Activated CD4-positive, alpha-beta T cell treated with anti-CD3 and anti-CD28 coated beads, Interleukin-2, amount 10 ng/mL, durations not matched to agents 24 days and 14 days (primary cell): ENCODE measurements at regions of chr3 and their contacts with region 1.

Region 1: DNA sequence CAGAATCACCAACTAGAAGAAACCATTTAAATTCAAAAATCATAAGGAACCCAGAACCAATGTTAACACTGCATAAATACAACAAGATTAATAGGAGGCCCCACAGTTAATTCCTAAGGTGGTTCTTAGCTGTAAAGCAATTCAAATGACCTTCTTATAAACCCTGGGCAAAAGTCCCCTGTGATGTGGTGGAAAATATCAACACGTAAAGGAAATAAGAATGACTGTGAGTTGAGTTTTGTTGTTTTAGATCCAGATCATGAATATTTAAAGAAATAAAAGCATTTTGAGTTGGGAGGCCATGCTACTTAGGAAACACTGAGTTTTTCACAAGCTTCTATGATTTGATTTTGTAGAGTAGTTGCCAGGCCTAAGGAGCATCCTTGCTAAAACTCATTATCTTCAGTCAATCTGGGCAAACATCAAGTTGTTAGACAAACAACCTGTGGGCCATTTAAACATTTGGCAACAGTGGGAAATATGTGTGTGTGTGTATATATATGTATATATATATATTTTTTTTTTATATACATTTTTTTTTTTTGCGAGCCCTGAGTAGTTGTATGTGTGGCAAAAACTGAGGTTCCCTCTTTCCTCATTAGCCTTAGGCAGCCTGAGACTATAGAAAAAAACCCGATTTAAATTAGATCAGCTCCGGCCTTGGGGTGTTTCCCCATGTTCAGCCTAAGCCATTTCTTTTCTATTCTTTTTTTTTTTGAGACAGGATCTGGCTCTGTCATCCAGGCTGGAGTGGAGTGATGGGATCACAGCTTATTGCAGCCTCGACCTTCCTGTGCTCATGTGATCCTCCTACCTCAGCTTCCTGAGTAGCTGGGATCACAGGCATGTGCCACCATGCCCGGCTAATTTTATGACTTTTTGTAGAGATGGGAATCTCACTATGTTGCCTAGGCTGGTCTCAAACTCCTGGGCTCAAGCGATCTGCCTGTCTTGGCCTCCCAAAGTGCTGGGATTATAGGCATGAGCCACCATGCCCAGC is 8.0 kb upstream of the PXK start:
- DNase-seq: peak; percentile 73
- H3K4me3 Mint-ChIP-seq: peak overlapping the region; percentile 67
- H3K27ac Mint-ChIP-seq: peak overlapping the region; percentile 90
- H3K4me1 Mint-ChIP-seq: peaks cover 28% of the 10 kb centered on the region
- H3K27me3 Mint-ChIP-seq: no peaks in the 10 kb centered on the region

Region 2: DNA sequence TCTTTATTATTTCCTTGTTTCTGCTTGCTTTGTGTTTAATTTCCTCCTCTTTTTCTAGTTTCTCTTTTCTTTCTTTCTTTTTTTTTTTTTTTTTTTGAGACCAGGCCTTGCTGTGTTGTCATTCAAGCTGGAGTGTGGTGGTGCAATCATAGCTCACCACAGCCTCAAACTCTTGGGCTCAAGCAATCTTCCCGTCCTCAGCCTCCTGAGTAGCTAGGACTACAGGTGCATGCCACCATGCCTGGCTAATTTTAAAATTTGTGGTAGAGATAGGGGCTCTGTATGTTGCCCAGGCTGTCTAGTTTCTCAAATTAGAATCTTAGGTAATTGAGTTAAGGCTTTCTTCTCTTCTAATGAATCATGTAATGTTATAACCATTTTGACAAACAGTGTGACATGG is 546.2 kb before region 1 on chr3:
- intact Hi-C with region 1: no loop called
- DNase-seq: no peak
- H3K4me3 Mint-ChIP-seq: no peak overlapping the region
- H3K27ac Mint-ChIP-seq: no peak overlapping the region
- H3K4me1 Mint-ChIP-seq: peaks cover 13% of the 10 kb centered on the region
- H3K27me3 Mint-ChIP-seq: no peaks in the 10 kb centered on the region

Region 3: GRCh38 chr3:57949785-57950615 is 374.7 kb before region 1 on chr3:
- intact Hi-C with region 1: no loop called
- DNase-seq: no peak
- H3K4me3 Mint-ChIP-seq: no peak overlapping the region
- H3K27ac Mint-ChIP-seq: no peak overlapping the region
- H3K4me1 Mint-ChIP-seq: no peaks in the 10 kb centered on the region
- H3K27me3 Mint-ChIP-seq: no peaks in the 10 kb centered on the region

Region 4: GRCh38 chr3:58206406-58207011 is 118.2 kb before region 1 on chr3:
- intact Hi-C with region 1: no loop called
- DNase-seq: peak; percentile 71
- H3K4me3 Mint-ChIP-seq: no peak overlapping the region
- H3K27ac Mint-ChIP-seq: peak overlapping the region; percentile 59
- H3K4me1 Mint-ChIP-seq: peaks cover 11% of the 10 kb centered on the region
- H3K27me3 Mint-ChIP-seq: peaks cover 14% of the 10 kb centered on the region

Region 5: DNA sequence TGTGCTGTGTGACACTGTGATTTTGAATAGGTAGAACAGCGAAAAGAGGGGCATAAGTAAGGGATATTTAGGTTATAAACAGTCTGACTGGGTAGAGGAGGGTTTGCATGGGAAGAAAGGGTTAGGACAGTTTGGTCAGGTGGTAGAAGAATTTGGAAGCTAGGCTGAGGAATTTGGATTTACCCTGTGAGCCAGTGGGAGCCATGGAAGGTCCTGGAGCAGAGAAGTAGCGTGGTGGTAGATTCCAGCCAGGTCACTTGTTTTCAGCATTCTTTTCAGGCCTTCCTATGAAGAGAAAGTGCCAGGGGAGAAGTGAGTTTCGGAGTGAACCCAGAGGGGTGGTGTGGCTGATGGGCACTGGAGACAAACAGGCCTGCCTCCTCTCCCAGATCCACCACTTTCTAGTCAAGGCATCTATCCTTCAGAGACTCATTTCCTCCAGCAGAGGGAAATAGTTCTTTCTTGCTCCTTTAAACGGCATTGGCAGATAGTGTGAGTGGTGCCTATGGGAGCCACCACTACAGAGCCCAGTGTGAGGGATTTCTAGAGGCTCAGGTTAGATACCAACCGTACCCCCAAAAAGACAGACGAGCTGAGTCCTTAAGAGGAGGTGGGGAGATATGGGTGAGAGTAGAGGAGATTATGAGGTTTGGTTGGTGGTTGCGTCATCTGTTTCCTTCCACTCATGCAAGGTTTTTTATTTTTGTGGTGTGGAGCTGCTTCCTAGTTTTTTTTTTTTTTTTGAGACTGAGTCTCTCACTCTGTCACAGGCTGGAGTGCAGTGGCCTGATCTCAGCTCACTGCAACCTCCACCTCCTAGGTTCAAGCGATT is 29.2 kb after region 1 on chr3:
- intact Hi-C with region 1: loop called (anchors 1 kb)
- DNase-seq: peak; percentile 87
- H3K4me3 Mint-ChIP-seq: peak overlapping the region; percentile 82
- H3K27ac Mint-ChIP-seq: peak overlapping the region; percentile 92
- H3K4me1 Mint-ChIP-seq: peaks cover 83% of the 10 kb centered on the region
- H3K27me3 Mint-ChIP-seq: no peaks in the 10 kb centered on the region

Region 6: GRCh38 chr3:58414538-58415197 is 90.0 kb after region 1 on chr3:
- intact Hi-C with region 1: loop called (anchors 1 kb)
- DNase-seq: peak; percentile 89
- H3K4me3 Mint-ChIP-seq: no peak overlapping the region
- H3K27ac Mint-ChIP-seq: no peak overlapping the region
- H3K4me1 Mint-ChIP-seq: peaks cover 5% of the 10 kb centered on the region
- H3K27me3 Mint-ChIP-seq: no peaks in the 10 kb centered on the region

Region 7: DNA sequence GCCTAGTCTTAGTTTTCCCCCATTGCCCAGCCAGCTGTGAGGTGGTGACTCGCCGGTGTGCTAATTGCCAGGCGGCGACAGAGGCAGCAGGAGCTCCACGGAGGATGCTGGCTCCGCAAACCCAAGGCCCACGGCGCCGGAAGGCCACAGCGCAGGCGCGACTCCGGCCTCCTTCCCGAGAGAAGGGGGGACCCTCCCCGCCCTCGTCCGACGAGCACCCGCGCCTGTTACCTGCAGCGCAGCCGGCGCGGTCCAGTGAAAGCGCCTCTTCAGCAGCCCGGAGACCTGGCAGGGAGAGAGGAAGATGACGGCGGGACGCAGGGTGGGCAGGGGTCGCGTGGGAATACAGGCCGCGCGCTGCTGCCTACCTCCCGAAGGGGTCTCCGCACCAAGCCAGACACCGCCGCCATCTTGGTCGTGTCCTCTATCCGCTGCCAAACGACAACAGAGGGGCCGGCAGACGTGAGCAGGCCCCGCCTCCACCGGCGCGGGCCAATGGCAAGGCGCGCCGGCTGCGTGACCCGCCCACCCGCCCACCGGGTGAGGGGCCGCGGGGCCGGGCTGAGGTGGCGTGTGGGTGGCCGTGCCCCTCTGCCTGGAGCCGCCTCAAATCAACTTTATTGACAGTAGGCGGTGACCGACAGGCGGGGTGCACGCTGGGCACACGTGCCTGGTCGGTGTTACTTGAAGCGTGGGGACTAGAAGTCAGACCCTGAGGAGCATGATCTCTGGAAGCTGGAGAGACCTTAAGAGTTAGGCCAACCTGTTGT is 108.9 kb after region 1 on chr3 and contains the start of gene PDHB:
- intact Hi-C with region 1: loop called (anchors 5 kb)
- DNase-seq: peak; percentile 97
- H3K4me3 Mint-ChIP-seq: peak within 1 kb of the TSS; percentile 92
- H3K27ac Mint-ChIP-seq: peak within 1 kb of the TSS; percentile 93
- H3K4me1 Mint-ChIP-seq: peaks cover 18% of the 10 kb centered on the region
- H3K27me3 Mint-ChIP-seq: peaks cover 11% of the 10 kb centered on the region
- total RNA-seq, gene PDHB: 68.0 and 69.3 TPM in 2 replicates

Region 8: DNA sequence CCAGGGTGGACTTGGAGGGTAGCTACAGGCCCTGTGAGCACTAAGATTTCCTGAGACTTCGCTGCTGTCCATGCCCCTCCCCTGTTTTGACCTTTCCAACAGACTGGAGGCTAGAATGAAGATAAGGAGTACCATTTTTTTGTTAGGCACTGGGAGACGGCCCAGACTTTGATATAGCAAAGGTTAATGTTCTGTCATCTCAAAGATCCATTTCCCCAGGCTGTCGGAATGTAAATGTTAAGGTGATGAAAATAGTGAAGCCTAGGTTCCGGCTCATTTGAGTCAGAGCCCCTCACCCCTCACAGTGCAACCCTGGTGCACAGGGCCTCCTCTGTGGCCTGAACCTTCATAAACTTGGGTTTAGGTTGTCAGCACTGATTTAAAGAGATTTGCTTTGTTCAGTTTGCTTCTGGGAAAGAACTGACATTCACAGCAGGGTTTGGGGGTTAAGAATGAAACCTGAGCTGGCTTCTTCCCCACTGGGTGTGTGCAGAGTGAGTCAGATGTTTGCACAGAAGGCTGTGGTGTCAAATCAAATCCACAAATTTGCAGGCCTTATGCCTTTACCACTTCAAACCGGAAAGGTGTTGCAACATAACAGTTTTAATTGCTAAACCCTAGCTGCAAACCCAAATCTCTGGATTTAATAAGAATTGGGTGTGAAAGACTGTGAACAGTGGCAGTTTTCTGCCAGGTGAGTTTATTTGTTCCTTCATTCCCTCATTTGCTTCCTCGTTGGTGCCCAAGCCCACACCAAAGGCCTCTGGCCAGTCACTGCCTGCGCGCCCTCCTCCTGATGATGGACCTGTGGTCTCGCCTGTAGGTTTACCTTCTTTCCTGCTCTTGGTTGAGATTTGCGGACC is 146.6 kb after region 1 on chr3:
- intact Hi-C with region 1: loop called (anchors 5 kb)
- DNase-seq: peak; percentile 88
- H3K4me3 Mint-ChIP-seq: peak overlapping the region; percentile 46
- H3K27ac Mint-ChIP-seq: peak overlapping the region; percentile 62
- H3K4me1 Mint-ChIP-seq: peaks cover 45% of the 10 kb centered on the region
- H3K27me3 Mint-ChIP-seq: peaks cover 2% of the 10 kb centered on the region

Region 9: DNA sequence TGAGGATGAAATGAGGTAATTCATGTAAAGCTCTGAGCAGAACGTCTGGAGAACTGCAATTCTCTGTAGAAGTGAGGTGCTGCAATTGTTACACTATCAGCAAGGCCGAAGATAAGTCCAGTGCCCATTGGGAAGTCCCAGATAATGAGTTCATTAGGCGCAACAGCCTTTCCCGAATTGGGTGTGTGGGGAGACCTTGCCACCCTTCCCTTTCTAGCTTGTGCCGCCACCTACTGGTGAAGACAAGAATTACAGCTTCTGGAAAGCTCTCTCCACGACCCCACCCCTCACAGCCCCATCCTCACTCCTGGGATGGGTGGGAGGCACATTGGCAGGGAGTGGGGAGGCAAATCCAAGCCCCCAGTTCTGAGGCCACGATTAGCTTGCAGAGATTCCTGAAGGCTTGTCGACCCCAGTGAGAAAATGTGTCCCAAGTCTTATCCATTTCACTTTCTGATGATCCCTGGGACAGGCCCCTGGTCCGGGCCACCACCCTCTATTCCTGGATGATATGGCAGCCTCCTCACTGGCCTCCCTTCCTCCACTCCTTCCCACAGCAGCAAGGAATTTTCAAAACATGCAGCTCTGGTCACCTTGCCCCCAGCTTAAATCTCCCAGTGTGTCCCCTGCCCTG is 305.5 kb after region 1 on chr3:
- intact Hi-C with region 1: loop called (anchors 5 kb)
- DNase-seq: peak; percentile 89
- H3K4me3 Mint-ChIP-seq: no peak overlapping the region
- H3K27ac Mint-ChIP-seq: no peak overlapping the region
- H3K4me1 Mint-ChIP-seq: no peaks in the 10 kb centered on the region
- H3K27me3 Mint-ChIP-seq: peaks cover 5% of the 10 kb centered on the region